Motor neuron (in vitro differentiated cells): ENCODE measurements at regions of chr5 and their contacts with region 1.

Region 1: GRCh38 chr5:59188419-59189225 is 605.7 kb downstream of the RAB3C start:
- ATAC-seq: peak; percentile 53 to 81 (median 68)
- H3K4me3 ChIP-seq: peak overlapping the region in 4 of 5 donors; percentile 9 to 31 (median 21)
- H3K27ac ChIP-seq: no peak overlapping the region
- H3K4me1 ChIP-seq: peaks cover 0 to 14% of the 10 kb centered on the region in 2 donors

Region 2: DNA sequence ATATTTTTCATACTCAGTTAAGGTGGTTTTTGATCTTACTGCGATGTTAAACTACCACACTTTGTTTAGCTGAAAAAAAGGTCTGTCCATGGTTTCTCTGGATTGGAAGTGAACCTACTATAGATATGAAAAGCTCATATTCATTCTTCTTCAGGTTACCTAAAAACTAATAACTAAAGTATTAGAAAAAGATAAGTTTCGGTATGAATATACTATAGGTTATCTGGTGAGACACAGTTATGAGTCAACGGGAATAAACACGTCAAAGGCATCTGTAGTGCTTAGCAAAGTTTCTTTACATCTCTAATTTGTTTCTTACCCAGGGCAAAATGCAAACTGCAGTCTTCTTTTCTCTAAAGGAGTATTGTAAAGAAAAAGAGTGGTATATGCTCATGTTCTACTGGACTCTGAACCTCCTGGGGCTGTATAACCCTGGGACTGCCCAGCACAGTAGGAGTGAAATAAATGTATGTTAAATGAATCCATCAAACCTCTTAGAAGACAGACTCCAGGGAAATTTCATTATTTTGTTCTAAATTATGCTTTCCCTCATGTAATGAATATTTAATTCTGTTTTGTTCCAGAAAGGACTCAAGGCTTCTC is 183.0 kb after region 1 on chr5:
- in situ Hi-C with region 1: loop called in 4 of 9 experiments (anchors 10 to 25 kb)
- ATAC-seq: no peak
- H3K4me3 ChIP-seq: no peak overlapping the region
- H3K27ac ChIP-seq: no peak overlapping the region
- H3K4me1 ChIP-seq: no peaks in the 10 kb centered on the region

Region 3: GRCh38 chr5:59380350-59380951 is 191.8 kb after region 1 on chr5:
- in situ Hi-C with region 1: loop called in 4 of 9 experiments (anchors 10 to 25 kb)
- ATAC-seq: peak; percentile 39 to 96 (median 56)
- H3K4me3 ChIP-seq: no peak overlapping the region
- H3K27ac ChIP-seq: no peak overlapping the region
- H3K4me1 ChIP-seq: peaks cover 0 to 2% of the 10 kb centered on the region in 2 donors

Region 4: GRCh38 chr5:59923465-59923864 is 734.8 kb after region 1 on chr5:
- in situ Hi-C with region 1: no loop called
- ATAC-seq: peak in 1 of 8 experiments; percentile 25
- H3K4me3 ChIP-seq: no peak overlapping the region
- H3K27ac ChIP-seq: no peak overlapping the region
- H3K4me1 ChIP-seq: peaks cover 0 to 4% of the 10 kb centered on the region in 2 donors